ENCODE measurements at regions of chr7 and their contacts with region 1.

Region 1: DNA sequence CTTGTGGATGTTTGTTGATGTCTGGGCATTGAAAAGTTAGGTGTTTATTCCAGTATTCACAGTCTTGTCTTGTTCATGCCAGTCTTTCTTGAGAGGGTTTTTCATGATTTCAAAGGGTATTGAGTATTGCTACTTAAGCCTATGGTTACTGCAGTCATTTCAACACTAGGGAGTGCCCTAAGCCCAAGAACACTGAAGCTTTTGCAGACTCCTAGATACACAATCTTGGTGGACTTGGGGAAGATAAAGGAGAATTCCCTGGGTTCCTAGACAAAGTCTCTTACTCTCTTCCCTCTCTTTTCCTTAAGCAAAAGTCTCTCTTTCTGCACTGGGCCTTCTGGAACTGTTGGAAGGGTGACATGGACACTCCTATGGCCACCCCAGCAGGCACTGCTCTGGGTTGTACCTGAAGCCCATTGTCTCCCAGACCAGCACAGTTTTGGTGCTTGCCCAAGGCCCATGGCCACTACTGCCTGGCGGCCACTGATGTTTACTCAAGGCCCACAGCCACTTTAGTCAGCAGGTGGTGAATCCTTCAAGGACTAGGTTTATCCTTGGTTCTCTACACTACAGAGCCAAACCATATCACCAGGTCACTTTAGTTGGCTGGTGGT is 24.9 kb downstream of the SAMD9 start:
- DNase-seq: no peak
- ATAC-seq: peak; percentile 97
- H3K4me3 ChIP-seq: no peak overlapping the region
- H3K27ac ChIP-seq: no peak overlapping the region
- H3K4me1 ChIP-seq: no peaks in the 10 kb centered on the region
- H3K27me3 ChIP-seq: no peaks in the 10 kb centered on the region
- CTCF ChIP-seq: peak; percentile 54 to 55 (median 55)
- EP300 ChIP-seq: no peak
- POLR2A ChIP-seq: no peak
- RAD21 ChIP-seq: peak; percentile 77

Region 2: GRCh38 chr7:93219868-93220267 is 127.0 kb after region 1 on chr7:
- CTCF ChIA-PET with region 1: interaction called, 70 read pairs
- POLR2A ChIA-PET with region 1: no interaction called
- RAD21 ChIA-PET with region 1: interaction called, 39 read pairs
- SMC1A ChIA-PET with region 1: interaction called, 41 read pairs
- in situ Hi-C with region 1: loop called (anchors 5 kb)
- intact Hi-C with region 1: no loop called
- DNase-seq: no peak
- ATAC-seq: no peak
- H3K4me3 ChIP-seq: no peak overlapping the region
- H3K27ac ChIP-seq: no peak overlapping the region
- H3K4me1 ChIP-seq: no peaks in the 10 kb centered on the region
- H3K27me3 ChIP-seq: no peaks in the 10 kb centered on the region; a peak in 1 of 4 replicates
- CTCF ChIP-seq: no peak
- EP300 ChIP-seq: no peak
- POLR2A ChIP-seq: no peak
- RAD21 ChIP-seq: no peak

Region 3: GRCh38 chr7:93374345-93374940 is 281.6 kb after region 1 on chr7:
- CTCF ChIA-PET with region 1: no interaction called
- POLR2A ChIA-PET with region 1: no interaction called
- RAD21 ChIA-PET with region 1: interaction called, 3 read pairs
- SMC1A ChIA-PET with region 1: no interaction called
- in situ Hi-C with region 1: no loop called
- intact Hi-C with region 1: loop called (anchors 10 kb)
- DNase-seq: no peak
- ATAC-seq: peak; percentile 84
- H3K4me3 ChIP-seq: no peak overlapping the region
- H3K27ac ChIP-seq: no peak overlapping the region
- H3K4me1 ChIP-seq: peaks cover 5% of the 10 kb centered on the region
- H3K27me3 ChIP-seq: 0 out of 4 replicates have a peak, but pooled peaks cover 0 to 3% of the 10 kb centered on the region in 2 experiments
- CTCF ChIP-seq: peak; percentile 63 to 87 (median 82)
- EP300 ChIP-seq: no peak
- POLR2A ChIP-seq: no peak
- RAD21 ChIP-seq: peak; percentile 67

Region 4: DNA sequence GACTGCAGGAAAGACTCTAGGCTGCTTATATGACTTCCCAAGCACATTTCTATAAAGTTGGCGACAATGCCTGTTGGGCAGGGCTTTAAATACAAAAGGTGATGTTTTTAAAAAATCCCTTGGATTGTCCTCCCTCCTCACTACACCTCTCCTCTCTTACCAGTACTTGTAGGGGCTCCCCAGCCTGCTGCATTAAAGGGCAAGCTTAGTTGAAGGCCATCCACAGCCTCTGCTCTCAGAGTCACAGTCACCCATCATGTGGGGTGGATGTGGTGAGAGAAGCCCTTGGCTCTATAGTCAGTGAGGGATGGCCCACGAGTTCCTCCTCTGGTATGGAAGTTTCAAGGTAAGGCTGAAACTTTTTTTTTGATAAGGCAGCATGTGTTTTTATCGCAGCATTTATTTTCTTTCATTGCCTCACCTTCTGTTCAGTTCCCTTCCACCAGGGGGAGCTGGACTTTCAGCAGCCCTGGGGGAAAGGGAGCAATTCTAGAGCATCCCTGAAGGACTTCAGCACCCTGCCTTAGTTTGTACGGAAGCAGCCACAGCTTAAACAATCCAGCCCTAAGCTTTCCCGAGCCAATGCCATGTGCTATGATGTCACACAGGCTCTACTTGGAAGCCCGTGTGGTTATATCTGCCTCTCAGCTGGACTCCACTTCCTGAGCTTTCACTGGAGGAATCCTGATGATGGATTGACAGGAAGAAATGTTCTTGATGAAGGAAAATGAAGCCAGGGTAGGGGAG is 349.8 kb after region 1 on chr7:
- CTCF ChIA-PET with region 1: no interaction called
- POLR2A ChIA-PET with region 1: no interaction called
- RAD21 ChIA-PET with region 1: no interaction called
- SMC1A ChIA-PET with region 1: no interaction called
- in situ Hi-C with region 1: no loop called
- intact Hi-C with region 1: loop called (anchors 10 kb)
- DNase-seq: no peak
- ATAC-seq: peak; percentile 86
- H3K4me3 ChIP-seq: no peak overlapping the region
- H3K27ac ChIP-seq: no peak overlapping the region
- H3K4me1 ChIP-seq: no peaks in the 10 kb centered on the region
- H3K27me3 ChIP-seq: no peaks in the 10 kb centered on the region; a peak in 2 of 4 replicates
- CTCF ChIP-seq: peak; percentile 57 to 79 (median 75)
- EP300 ChIP-seq: no peak
- POLR2A ChIP-seq: no peak
- RAD21 ChIP-seq: peak; percentile 56

Region 5: GRCh38 chr7:93544691-93545090 is 451.8 kb after region 1 on chr7:
- CTCF ChIA-PET with region 1: interaction called, 3 read pairs
- POLR2A ChIA-PET with region 1: no interaction called
- RAD21 ChIA-PET with region 1: no interaction called
- SMC1A ChIA-PET with region 1: no interaction called
- in situ Hi-C with region 1: loop called (anchors 25 kb)
- intact Hi-C with region 1: no loop called
- DNase-seq: no peak
- ATAC-seq: no peak
- H3K4me3 ChIP-seq: no peak overlapping the region
- H3K27ac ChIP-seq: no peak overlapping the region
- H3K4me1 ChIP-seq: no peaks in the 10 kb centered on the region
- H3K27me3 ChIP-seq: no peaks in the 10 kb centered on the region
- CTCF ChIP-seq: no peak
- EP300 ChIP-seq: no peak
- POLR2A ChIP-seq: no peak
- RAD21 ChIP-seq: no peak

Region 6: GRCh38 chr7:93551063-93551904 is 458.4 kb after region 1 on chr7:
- CTCF ChIA-PET with region 1: interaction called, 3 read pairs
- POLR2A ChIA-PET with region 1: no interaction called
- RAD21 ChIA-PET with region 1: no interaction called
- SMC1A ChIA-PET with region 1: no interaction called
- in situ Hi-C with region 1: loop called (anchors 25 kb)
- intact Hi-C with region 1: loop called (anchors 10 kb)
- DNase-seq: no peak
- ATAC-seq: peak; percentile 70
- H3K4me3 ChIP-seq: no peak overlapping the region
- H3K27ac ChIP-seq: no peak overlapping the region
- H3K4me1 ChIP-seq: no peaks in the 10 kb centered on the region
- H3K27me3 ChIP-seq: 0 out of 4 replicates have a peak, but pooled peaks cover 0 to 1% of the 10 kb centered on the region in 2 experiments
- CTCF ChIP-seq: peak; percentile 50 to 54 (median 50); a peak in 5 of 6 replicates
- EP300 ChIP-seq: no peak
- POLR2A ChIP-seq: no peak
- RAD21 ChIP-seq: peak; percentile 66